Dorsolateral prefrontal cortex (tissue), 120 donors: ENCODE measurements at regions of chr16 and their contacts with region 1.

Region 1: DNA sequence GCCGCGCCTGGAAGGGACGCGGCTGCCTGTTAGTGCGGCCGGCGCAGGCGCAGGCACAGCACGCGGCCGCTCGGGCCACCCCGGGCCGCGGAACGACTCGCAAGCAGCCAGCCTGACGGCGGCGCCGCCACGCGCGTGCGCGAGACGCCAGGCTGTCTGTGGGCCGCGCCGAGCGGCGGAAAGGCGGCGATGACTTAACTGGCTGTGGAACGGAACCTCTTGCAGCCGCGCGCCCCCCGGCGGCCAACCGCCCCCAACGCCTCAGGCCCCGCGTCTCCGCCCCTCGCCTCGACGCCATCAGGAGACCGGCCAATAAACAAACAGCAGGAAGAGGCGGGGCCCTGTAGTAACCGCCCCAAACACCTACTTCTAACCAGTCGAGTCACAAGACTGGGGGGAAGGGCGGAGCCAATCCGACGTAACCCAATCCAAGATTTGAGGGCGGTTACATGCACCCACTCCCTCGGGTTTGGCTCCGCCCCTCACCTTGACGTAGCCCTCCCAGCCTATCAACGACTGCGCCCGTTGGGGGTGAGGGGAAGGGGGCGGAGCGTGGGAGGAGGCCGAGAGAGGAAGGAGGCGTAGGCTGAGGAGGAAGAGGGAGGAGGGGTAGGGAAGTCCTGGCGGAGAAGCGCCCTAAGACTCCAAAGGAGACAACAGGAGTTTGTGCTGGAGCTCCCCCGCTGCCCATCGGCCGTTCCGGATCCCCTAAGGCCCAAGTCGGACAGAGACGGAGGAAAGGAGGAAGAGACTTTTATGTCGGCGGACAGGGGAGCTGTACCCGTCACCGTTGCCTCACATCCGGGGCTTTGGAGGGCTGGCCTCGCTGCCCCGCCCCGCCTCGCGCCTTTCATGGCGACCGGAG is at the start of gene FBRS:
- DNase-seq: peak; percentile 99 to 100 (median 100)
- H3K4me3 ChIP-seq: peak within 1 kb of the TSS; percentile 63 to 97 (median 88)
- H3K27ac ChIP-seq: peak within 1 kb of the TSS; percentile 93 to 100 (median 100)
- H3K27me3 ChIP-seq: no peaks in the 10 kb centered on the region
- CTCF ChIP-seq: peak; percentile 57 to 96 (median 88)
- total RNA-seq, gene FBRS: 39.8 to 86.3 (median 56.3) TPM

Region 2: DNA sequence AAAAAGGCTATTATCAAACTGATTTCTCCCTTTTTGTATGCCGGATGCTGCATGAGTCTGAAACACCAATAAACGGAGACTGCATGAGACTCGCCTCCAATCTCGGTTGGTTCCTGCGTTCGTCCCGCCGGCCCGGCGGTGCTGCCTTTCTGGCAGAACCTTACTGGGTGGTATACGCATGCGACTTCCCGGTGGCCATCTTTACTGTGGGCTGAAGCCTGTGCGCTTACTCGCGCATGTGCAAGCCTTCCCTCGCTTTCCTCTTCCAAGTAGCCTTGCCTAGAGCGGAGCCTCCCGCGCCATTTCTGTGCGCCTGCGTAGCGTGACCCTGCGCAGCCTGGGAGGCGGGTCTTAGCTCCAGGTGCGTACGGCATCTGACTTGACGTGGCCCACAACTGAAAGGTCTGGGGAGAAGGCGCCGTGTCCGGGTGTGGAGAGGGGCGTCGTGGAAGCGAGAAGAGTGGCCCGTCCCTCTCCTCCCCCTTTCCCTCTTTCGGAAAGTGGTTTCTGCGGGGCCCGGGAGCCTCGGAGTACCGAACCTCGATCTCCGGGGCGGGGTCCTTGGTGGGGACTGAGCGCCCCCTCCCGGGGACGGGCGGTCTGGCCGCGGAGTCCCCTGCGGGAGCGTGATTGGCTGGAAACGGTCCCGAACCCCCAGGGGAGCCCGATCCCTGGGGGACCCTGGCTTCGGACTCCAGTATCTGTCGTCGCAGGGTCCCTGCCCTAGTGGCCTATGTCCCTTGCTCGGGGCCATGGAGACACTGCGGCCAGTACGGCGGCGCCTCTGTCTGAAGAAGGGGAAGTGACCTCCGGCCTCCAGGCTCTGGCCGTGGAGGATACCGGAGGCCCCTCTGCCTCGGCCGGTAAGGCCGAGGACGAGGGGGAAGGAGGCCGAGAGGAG is 842.1 kb before region 1 on chr16 and contains the start of gene PAGR1:
- intact Hi-C with region 1: loop called in 1 of 2 experiments (anchors 5 kb)
- DNase-seq: peak; percentile 96 to 99 (median 98)
- H3K4me3 ChIP-seq: peak within 1 kb of the TSS; percentile 64 to 97 (median 84)
- H3K27ac ChIP-seq: peak within 1 kb of the TSS; percentile 79 to 99 (median 97)
- H3K27me3 ChIP-seq: no peaks in the 10 kb centered on the region
- CTCF ChIP-seq: peak; percentile 63 to 98 (median 88)
- total RNA-seq, gene PAGR1: 16.6 to 44.6 (median 24.7) TPM

Region 3: DNA sequence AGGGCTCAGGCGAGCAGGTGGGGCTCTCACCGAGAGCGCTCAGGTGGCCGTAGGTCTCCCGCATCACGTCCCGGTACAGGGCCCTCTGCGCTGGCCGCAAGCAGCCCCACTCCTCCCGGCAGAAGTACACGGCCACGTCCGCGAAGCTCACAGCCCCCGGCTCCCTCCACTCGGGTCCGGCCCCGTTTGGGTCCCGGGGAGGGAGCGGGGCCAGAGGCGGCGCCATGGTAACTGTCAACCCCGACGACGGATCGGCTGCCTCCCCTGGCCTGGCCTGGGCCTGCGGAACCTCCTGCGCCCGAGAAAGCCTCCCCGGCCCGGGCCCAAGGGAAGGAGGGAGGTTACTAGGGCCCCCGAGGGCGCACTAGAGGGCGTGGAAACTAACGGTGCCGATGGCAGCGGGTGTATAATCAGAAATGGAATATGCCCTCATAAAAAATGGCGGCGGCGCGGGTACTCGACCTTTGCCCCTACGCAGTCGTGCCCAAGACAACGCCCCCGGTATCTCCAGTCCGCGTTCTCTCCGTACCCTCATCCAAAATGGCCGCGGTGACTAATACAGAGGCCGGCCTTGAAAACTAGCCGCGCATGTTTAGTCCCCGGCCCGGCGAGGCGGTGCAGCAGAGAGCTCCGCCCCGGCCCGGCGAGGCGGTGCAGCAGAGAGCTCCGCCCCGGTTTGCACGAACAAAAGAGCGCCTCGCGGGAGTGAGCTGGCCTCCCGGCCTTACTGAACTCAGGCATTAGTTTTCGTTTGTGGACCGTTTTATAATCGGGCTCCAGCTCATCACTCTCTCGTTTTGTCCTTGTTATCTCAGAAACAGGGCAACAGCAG is 99.9 kb before region 1 on chr16 and contains the start of gene ZNF764:
- intact Hi-C with region 1: loop called in 1 of 2 experiments (anchors 2 kb)
- DNase-seq: peak; percentile 97 to 99 (median 98)
- H3K4me3 ChIP-seq: peak within 1 kb of the TSS; percentile 72 to 100 (median 94)
- H3K27ac ChIP-seq: peak within 1 kb of the TSS; percentile 72 to 98 (median 94)
- H3K27me3 ChIP-seq: no peaks in the 10 kb centered on the region
- CTCF ChIP-seq: peak in 44 of 56 donors; percentile 5 to 67 (median 40)
- total RNA-seq, gene ZNF764: 8.2 to 19.0 (median 11.5) TPM

Region 4: GRCh38 chr16:30747799-30748634 is 89.9 kb after region 1 on chr16 and contains the start of gene PHKG2:
- intact Hi-C with region 1: loop called in 1 of 2 experiments (anchors 10 kb)
- DNase-seq: peak; percentile 98 to 100 (median 99)
- H3K4me3 ChIP-seq: peak within 1 kb of the TSS; percentile 58 to 97 (median 80)
- H3K27ac ChIP-seq: peak within 1 kb of the TSS in 55 of 59 donors; percentile 3 to 88 (median 75)
- H3K27me3 ChIP-seq: no peaks in the 10 kb centered on the region
- CTCF ChIP-seq: peak in 33 of 56 donors; percentile 7 to 61 (median 34)
- total RNA-seq, gene PHKG2: 25.1 to 55.2 (median 38.8) TPM

Region 5: DNA sequence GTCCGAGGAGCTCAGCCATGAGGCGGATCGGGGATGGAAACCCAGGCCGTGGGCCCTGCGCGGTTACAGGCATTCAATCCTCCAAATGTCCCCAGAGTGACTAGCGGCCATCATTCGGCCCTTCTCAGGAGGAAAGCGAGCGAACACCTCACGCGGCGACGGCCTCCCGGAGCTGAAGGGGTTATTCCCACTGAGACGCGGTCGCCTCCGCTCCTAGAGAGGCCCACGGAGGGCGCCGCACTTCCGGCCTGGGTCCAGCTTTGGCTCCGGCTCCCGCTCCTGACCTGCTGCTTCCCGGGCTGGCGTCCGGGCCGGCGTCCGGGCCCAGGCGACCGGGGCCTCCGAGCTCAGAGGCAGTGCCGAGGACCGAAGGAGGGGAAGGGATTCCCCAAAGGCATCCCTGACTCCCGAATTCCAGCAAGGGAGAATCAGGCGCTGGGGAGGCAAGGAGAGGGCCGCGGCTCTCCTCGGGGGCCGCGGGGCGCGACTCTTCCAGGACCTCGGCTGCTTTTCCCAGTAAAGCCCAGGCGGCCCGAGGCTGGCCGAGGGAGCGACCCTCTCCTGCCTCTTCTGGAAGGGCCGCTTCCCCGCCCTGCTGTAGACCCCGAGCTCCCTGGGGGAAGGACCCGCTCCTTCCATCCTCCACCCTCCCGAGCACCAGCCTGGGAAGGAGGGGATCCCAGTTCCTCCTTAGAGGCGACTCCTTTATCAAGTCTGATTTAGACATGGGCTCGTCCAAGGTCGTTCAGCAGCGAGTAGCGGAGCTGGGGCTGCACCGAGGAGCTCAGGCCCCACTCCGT is 147.5 kb after region 1 on chr16:
- intact Hi-C with region 1: loop called in 1 of 2 experiments (anchors 5 kb)
- DNase-seq: peak; percentile 78 to 94 (median 88)
- H3K4me3 ChIP-seq: peak overlapping the region; percentile 63 to 99 (median 88)
- H3K27ac ChIP-seq: peak overlapping the region; percentile 70 to 98 (median 92)
- H3K27me3 ChIP-seq: no peaks in the 10 kb centered on the region
- CTCF ChIP-seq: peak in 47 of 56 donors; percentile 12 to 63 (median 41)